ENCODE measurements at regions of chr1 and their contacts with region 1.

Region 1: DNA sequence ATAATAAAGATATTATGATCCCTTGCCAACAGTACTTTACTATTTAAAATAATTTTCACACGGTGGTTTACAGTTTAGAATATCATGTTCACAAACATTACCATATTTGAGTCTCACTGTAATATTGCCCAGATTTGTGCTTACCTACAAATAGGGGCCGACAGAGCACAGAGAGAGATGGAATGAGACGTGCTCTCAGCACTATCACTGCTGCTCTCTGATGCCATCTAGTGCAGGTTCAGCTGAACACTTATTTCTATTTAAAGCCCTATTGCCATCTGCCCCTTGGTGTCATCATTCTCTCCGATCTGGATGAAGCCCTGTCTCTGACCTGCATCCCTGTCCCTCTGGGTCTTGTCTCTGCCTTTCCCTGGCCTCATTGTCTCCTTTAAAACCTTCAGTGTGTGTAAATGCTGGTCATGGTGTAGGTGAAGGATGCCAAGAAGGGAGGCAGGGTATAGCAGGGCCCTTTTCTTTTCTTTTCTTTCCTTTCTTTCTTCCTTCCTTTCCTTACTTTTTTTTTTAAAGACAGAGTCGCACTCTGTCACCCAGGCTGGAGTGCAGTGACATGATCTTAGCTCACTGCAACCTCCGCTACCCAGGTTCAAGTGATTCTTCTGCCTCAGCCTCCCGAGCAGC is 6.9 kb upstream of the GPATCH4 start:
- DNase-seq: no peak
- ATAC-seq: peak; percentile 91

Region 2: GRCh38 chr1:156104065-156104810 is 503.9 kb before region 1 on chr1:
- intact Hi-C with region 1: no loop called
- DNase-seq: peak; percentile 88
- ATAC-seq: peak; percentile 66

Region 3: GRCh38 chr1:156383023-156383422 is 225.1 kb before region 1 on chr1:
- intact Hi-C with region 1: loop called (anchors 5 kb)
- DNase-seq: peak; percentile 61
- ATAC-seq: peak; percentile 83

Region 4: DNA sequence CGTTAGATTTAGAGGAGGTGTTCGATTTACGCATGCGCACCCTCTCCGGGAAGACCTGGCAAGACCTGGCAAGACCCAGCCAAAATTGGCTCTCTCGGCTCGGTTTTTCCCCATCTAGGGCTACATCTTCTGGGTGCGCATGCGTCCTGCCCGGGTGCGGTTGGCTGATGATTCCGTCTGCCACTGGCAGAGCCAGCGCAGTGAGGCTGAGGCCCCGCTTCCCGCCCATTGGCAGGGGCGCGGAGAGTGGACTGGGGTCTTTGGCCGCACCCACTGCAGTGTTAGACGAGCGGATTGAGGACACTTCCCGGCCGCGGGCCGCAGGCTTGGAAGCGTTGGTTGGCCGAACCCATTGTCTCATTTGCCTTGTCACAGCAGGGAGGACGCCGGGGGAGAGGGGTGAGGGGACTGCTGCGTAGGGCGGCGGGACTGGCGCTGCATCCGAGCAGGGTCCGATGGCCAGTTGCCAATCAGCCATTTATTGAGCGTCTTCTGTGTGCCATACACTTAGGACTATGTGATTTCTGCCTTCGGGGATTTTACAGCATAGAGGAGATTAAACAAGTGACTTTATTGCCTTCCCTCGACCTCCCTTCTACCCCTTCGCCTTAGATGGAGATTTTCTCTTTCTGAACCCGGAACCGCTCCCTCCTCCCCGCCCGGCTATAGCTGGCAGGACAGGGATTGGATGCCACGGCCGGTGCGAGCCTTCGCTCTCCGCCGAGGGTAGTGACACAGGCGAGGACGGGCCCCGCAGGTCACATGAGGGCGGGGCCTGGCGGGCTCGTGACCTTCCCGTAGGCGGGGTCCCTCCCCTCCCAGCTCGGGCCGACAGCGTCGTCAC is 151.3 kb before region 1 on chr1:
- intact Hi-C with region 1: loop called (anchors 1 kb)
- DNase-seq: peak; percentile 98
- ATAC-seq: peak; percentile 95

Region 5: DNA sequence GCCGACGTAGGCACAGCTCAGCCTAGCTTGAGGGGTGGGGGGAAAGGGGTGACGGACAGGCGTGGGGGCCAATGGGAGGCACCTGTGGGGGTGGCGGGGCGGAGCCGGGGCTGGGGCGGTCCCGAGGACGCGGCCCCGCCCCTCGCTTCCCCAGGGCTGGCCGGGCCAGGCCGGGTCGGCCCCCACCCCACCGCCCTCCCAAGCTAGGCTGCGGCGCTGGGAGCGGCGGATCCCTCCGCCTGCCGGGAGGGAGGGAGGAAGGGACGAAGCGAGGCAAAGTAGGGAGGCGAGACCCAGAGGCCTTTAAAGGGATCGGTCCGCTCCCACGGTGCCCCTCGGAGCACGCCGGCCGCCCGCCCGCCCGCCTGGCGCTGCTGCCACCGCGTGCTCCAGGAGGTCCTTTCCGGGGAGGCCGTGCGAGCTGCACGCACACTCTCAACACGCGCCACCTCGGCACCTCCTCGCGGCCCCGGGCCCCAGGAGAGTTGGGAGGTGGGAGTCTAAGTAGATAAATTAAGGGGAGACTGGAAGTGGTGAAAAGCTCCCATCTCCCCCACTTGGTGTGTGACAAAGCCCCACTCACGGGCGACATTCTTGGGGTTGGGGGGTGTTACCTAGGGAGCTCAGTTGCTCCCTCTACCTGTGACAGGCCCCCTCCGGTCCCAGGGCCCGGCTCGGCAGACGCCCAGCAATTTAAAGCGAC is 107.2 kb before region 1 on chr1:
- intact Hi-C with region 1: loop called (anchors 5 kb)
- DNase-seq: peak; percentile 96
- ATAC-seq: peak; percentile 85

Region 6: DNA sequence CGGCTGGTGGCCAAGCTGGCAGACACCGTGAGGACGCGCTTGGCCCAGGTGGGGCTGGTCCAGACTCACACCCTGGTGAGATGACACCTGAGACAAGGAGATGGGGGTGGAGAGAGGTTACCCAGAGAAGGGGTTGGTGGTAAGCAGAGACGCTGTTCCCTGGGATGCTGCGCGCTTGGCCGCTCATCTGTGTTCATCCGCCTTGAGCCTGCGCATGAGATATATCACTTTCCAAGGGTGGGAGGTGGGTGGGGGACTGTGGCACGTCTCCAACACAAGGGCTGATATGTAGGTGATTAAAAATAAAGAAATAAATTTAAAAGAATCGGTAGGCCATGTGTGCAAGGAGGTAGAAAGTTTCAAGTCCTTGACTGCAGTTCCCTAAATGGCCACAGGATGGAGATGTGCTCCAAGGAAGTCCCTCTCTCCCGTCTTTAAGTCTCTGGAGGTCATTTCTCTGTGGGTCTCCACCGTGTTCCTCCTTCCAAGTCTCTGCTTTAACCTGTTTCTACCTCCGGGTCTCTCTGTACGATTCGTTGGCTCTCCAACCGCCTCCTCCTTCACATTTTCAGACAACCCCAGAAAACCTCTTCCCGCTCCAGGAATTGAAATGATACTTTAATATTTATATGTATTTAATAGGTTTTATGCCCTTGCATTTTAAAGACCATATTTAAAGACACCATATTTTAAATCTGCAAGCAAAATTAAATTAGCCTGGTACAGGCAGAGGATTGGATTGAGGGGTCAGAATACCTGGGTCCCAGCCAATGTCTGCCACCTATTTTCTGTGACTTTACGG is 24.1 kb before region 1 on chr1:
- intact Hi-C with region 1: loop called (anchors 2 kb)
- DNase-seq: no peak
- ATAC-seq: no peak

Region 7: GRCh38 chr1:156625436-156626078 is 17.4 kb after region 1 on chr1:
- intact Hi-C with region 1: no loop called
- DNase-seq: peak; percentile 84
- ATAC-seq: peak; percentile 62